Activated CD8-positive, alpha-beta memory T cell treated with anti-CD3 and anti-CD28 coated beads, Interleukin-2, amount 10 ng/mL, durations not matched to agents 7 days and 5 days (primary cell): ENCODE measurements at regions of chr17 and their contacts with region 1.

Region 1: GRCh38 chr17:76547184-76547641 is 7.4 kb downstream of the PRCD start:
- DNase-seq: peak; percentile 75
- ATAC-seq: peak; percentile 90
- H3K4me3 Mint-ChIP-seq: no peak overlapping the region
- H3K27ac Mint-ChIP-seq: no peak overlapping the region
- H3K4me1 Mint-ChIP-seq: peaks cover 5% of the 10 kb centered on the region
- H3K27me3 Mint-ChIP-seq: peaks cover 11% of the 10 kb centered on the region

Region 2: DNA sequence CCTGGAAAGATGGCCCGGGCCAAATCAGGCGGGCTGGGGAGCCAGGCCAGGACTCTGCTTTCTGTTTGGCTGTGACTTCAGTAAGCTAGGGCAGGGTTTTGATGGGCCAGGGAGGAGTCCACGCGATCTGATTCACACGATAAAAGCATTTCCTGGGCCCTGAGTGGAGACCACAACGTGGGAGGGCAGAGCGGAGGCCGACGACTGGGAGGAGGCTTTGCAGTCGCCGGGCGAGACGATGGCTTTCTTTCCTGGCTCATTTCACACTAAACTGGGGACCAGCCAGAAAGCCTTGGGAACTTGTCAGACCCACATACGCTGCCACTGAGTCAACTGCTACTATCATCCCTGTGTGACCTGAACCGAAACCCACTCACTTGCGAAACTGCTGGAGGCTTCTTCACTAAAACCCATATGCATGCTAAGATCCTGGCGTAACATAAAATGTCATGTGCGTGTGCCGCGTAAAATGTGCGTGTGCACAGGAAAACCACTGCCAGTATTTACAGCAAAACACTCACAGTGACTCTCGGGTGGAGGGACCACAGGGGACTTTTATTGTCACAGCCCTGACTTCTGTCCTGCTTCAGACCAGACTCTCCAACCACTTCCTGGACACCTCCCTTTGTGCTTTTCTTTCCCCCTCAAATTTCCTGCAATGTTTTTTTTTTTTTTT is 31.8 kb before region 1 on chr17:
- CTCF ChIA-PET with region 1: interaction called, 10 read pairs
- DNase-seq: peak; percentile 91
- ATAC-seq: peak; percentile 86
- H3K4me3 Mint-ChIP-seq: peak overlapping the region; percentile 53
- H3K27ac Mint-ChIP-seq: peak overlapping the region; percentile 98
- H3K4me1 Mint-ChIP-seq: peaks cover 47% of the 10 kb centered on the region
- H3K27me3 Mint-ChIP-seq: no peaks in the 10 kb centered on the region

Region 3: DNA sequence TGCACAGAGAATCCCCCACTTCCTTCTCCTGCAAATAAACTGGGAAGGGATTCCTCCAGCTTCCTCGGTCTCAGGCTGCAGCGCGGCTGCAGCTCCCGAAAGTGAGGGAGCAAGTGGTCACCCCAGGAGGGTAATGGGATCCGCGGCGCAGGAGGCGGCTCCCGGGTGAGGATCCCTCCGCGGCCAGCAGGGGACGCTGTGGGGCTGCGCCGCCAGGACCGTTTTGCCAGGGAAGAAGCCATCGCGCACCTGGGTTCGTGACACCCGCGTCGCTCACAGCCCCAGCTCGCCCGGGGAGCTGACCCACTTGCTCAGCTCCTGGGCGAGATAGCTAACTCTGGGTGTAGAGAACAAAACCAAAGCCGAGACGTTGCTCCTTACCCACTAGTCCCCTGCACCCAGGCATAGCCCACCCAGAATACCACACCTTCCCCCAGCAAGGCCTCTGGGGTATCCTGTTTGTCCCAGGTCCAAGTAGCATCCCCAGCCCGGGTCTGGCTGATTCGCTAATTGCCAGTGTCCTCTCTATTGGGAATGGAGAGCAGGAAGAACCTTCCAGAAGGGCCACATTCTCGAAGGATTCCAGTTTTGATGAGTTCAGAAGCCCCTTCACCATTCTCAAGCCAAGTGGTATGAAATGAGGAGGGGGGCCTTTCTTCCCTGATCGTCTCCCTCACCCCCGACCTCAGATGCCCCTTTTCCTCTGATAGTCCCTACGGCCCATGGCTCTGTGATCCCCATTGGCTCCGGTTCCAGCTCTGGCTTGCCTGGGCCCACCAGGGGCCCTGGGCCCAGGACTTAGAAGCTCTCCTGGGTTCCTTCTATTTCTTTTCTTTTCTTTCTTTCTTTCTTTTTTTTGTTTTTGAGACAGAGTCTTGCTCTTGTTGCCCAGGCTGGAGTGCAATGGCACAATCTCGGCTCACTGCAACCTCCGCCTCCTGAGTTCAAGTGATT is 23.9 kb before region 1 on chr17:
- CTCF ChIA-PET with region 1: interaction called, 77 read pairs
- DNase-seq: peak; percentile 85
- ATAC-seq: peak; percentile 88
- H3K4me3 Mint-ChIP-seq: peak overlapping the region; percentile 8
- H3K27ac Mint-ChIP-seq: no peak overlapping the region
- H3K4me1 Mint-ChIP-seq: peaks cover 15% of the 10 kb centered on the region
- H3K27me3 Mint-ChIP-seq: peaks cover 7% of the 10 kb centered on the region

Region 4: GRCh38 chr17:76671912-76672262 is 124.7 kb after region 1 on chr17:
- CTCF ChIA-PET with region 1: no interaction called
- DNase-seq: no peak
- ATAC-seq: peak; percentile 1
- H3K4me3 Mint-ChIP-seq: peak overlapping the region; percentile 90
- H3K27ac Mint-ChIP-seq: peak overlapping the region; percentile 88
- H3K4me1 Mint-ChIP-seq: peaks cover 26% of the 10 kb centered on the region
- H3K27me3 Mint-ChIP-seq: peaks cover 6% of the 10 kb centered on the region

Region 5: GRCh38 chr17:76700617-76701470 is 153.6 kb after region 1 on chr17:
- CTCF ChIA-PET with region 1: no interaction called
- DNase-seq: peak; percentile 60
- ATAC-seq: peak; percentile 64
- H3K4me3 Mint-ChIP-seq: peak overlapping the region; percentile 4
- H3K27ac Mint-ChIP-seq: peak overlapping the region; percentile 24
- H3K4me1 Mint-ChIP-seq: peaks cover 28% of the 10 kb centered on the region
- H3K27me3 Mint-ChIP-seq: no peaks in the 10 kb centered on the region